Activated CD4-positive, alpha-beta memory T cell treated with anti-CD3 and anti-CD28 coated beads for 36 hours (primary cell): ENCODE measurements at regions of chrX and their contacts with region 1.

Region 1: GRCh38 chrX:7925867-7926472 is 1.2 kb downstream of the PNPLA4 start:
- DNase-seq: peak; percentile 65
- H3K4me3 Mint-ChIP-seq: peak overlapping the region; percentile 87
- H3K27ac Mint-ChIP-seq: no peak overlapping the region
- H3K4me1 Mint-ChIP-seq: peaks cover 4% of the 10 kb centered on the region
- H3K27me3 Mint-ChIP-seq: no peaks in the 10 kb centered on the region

Region 2: GRCh38 chrX:6021316-6022091 is 1904.5 kb before region 1 on chrX:
- CTCF ChIA-PET with region 1: no interaction called
- POLR2A ChIA-PET with region 1: no interaction called
- intact Hi-C with region 1: loop called (anchors 10 kb)
- DNase-seq: peak; percentile 11
- H3K4me3 Mint-ChIP-seq: no peak overlapping the region
- H3K27ac Mint-ChIP-seq: no peak overlapping the region
- H3K4me1 Mint-ChIP-seq: no peaks in the 10 kb centered on the region
- H3K27me3 Mint-ChIP-seq: no peaks in the 10 kb centered on the region

Region 3: GRCh38 chrX:7083468-7084396 is 842.2 kb before region 1 on chrX:
- CTCF ChIA-PET with region 1: no interaction called
- POLR2A ChIA-PET with region 1: no interaction called
- intact Hi-C with region 1: loop called (anchors 5 kb)
- DNase-seq: peak; percentile 69
- H3K4me3 Mint-ChIP-seq: no peak overlapping the region
- H3K27ac Mint-ChIP-seq: peak overlapping the region; percentile 4
- H3K4me1 Mint-ChIP-seq: peaks cover 38% of the 10 kb centered on the region
- H3K27me3 Mint-ChIP-seq: no peaks in the 10 kb centered on the region

Region 4: GRCh38 chrX:7147978-7148824 is 777.8 kb before region 1 on chrX and contains the start of gene PUDP:
- CTCF ChIA-PET with region 1: no interaction called
- POLR2A ChIA-PET with region 1: no interaction called
- intact Hi-C with region 1: loop called (anchors 1 kb)
- DNase-seq: peak; percentile 86
- H3K4me3 Mint-ChIP-seq: peak within 1 kb of the TSS; percentile 80
- H3K27ac Mint-ChIP-seq: peak within 1 kb of the TSS; percentile 85
- H3K4me1 Mint-ChIP-seq: peaks cover 15% of the 10 kb centered on the region
- H3K27me3 Mint-ChIP-seq: no peaks in the 10 kb centered on the region
- total RNA-seq, gene PUDP: 16.5 to 17.4 TPM

Region 5: DNA sequence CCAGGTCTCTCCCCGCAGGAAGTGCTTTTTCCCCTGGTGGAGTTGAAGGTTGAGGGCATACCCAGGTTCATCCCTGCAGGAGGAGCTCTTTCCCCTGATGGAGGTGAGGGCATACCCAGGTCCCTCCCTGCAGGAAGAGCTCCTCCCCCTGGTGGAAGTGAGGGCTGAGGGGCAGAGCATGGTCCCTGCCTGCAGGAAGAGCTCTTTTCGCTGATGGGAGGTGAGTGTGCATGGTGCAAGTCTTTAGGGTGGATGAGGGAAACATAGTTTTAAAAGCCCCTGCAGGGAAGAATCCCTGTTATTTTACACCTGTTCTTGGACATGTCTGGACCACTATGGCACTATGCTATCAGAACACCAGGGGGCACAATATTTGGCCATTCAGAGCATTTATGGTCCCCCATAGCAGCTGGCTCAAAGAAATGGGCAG is 734.3 kb before region 1 on chrX:
- CTCF ChIA-PET with region 1: no interaction called
- POLR2A ChIA-PET with region 1: no interaction called
- intact Hi-C with region 1: loop called (anchors 5 kb)
- DNase-seq: no peak
- H3K4me3 Mint-ChIP-seq: no peak overlapping the region
- H3K27ac Mint-ChIP-seq: no peak overlapping the region
- H3K4me1 Mint-ChIP-seq: no peaks in the 10 kb centered on the region
- H3K27me3 Mint-ChIP-seq: no peaks in the 10 kb centered on the region